Cardiac septum (tissue), 1 donor: ENCODE measurements at regions of chr1 and their contacts with region 1.

Region 1: DNA sequence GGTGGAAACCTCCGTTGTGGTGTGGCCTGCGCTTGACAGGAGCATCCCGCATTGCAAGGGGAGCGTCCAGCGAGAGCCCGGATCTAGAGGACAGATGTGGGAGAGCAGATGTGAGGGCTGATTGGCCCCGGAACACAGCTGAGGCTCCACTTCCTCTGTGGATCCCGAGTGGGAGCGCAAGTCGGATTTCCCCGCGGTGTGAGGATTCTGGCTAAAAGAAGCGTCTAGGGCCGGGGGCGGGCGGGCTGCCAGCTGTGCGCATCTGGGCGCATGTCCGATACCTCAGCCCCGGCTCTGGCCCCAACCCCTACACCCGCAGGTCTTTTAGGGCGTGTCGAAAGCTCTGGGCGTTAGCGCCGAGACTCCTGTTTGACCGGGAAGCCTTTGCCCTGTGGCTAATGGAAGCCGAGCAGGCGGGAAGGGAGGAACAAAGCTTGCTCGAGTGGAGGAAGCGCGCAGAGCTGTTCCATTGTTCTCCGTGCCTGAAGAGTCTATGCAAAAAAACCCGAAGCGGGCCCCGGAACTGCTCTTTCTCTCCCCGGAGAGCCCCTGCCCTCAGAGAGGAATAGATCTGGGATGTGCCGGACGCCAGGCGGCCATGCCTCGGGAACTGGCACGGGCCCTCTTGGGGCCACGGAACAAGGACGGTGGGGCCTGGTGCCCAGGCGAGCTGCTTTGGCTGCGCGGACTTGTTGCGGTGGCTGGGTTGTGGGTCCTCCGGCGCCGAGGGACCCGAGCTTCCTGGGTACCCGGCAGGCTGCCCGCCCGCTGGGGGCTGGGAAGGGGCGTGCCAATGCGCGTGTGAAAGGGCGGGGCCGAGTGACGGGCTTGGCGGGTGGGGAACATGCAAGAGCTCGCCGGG is 111.1 kb downstream of the NAV1 start:
- DNase-seq: peak; percentile 91

Region 2: GRCh38 chr1:201538612-201539551 is 111.1 kb before region 1 on chr1 and contains the start of gene NAV1:
- intact Hi-C with region 1: loop called (anchors 5 kb)
- DNase-seq: peak; percentile 88
- total RNA-seq, gene NAV1: 86.6 TPM

Region 3: GRCh38 chr1:201559679-201560162 is 90.3 kb before region 1 on chr1:
- intact Hi-C with region 1: loop called (anchors 5 kb)
- DNase-seq: peak; percentile 93

Region 4: GRCh38 chr1:201692555-201693394 is 42.8 kb after region 1 on chr1:
- intact Hi-C with region 1: loop called (anchors 5 kb)
- DNase-seq: no peak

Region 5: DNA sequence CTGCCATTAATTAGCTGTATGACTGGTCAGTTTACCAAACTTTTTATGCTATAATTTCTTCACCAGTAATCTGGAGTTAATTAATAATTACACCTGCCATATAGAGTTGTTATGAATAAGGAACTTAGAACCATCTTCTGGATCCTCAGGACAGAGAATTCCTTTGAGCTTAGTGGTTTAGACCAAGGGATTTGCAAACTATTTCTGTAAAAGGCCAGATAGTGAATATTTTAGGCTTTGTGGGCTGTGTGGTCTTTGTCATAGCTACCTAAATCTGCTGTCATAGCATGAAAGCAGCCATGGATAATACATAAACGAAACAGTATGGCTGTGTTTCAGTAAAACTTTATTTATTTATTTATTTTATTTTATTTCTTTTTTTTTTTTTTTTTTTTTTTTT is 314.3 kb after region 1 on chr1:
- intact Hi-C with region 1: no loop called
- DNase-seq: no peak